Activated T-helper 1 cell treated with anti-CD3 and anti-CD28 coated beads, Interleukin-12 subunit alpha, Interleukin-12 subunit beta, Interleukin-2, Interleukin-4 antibody, amounts not matched to agents 30 ng/mL and 10 ng/mL and 1 ng/mL, durations not matched to agents 14 hours and 24 hours and 36 hours (primary cell): ENCODE measurements at regions of chr12 and their contacts with region 1.

Region 1: DNA sequence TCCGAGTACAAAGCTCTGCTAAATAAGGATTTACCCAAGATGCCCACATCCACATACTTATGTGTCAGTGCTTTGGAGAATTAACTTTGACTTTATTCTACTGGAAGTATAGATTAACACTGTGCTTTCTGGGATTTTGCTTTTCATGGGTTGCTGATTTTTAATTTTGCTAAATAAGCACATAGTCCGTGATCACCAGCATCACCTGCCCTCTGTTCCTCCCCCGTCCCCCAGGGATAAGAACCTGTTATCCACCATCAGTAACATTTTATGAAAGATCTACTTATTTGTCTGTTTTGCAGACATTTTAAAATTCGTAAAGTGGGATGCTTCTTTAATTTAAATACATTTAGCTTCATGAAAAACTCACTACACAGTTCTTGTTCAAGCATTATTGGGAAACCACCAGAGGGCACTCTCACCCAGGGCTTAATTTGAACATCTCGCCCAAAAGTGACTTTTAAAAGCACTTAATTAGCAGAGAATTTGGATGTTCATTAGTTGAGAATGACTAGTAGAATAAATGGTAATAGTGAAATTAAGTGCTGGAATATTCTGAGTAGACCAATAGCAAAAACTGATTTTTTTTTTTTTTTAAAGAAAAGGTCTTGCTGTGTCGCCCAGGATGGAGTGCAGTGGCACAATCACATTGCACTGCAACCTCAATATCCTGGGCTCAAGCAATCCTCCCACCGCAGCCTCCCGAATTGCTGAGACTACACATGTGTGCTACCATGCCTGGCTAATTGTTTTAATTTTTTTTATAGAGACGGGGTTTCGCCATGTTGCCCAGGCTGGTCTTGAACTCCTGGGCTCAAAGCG is 35.7 kb downstream of the MRPL42 start:
- DNase-seq: peak; percentile 42
- H3K4me3 Mint-ChIP-seq: no peak overlapping the region
- H3K27ac Mint-ChIP-seq: no peak overlapping the region
- H3K4me1 Mint-ChIP-seq: peaks cover 32% of the 10 kb centered on the region
- H3K27me3 Mint-ChIP-seq: no peaks in the 10 kb centered on the region

Region 2: DNA sequence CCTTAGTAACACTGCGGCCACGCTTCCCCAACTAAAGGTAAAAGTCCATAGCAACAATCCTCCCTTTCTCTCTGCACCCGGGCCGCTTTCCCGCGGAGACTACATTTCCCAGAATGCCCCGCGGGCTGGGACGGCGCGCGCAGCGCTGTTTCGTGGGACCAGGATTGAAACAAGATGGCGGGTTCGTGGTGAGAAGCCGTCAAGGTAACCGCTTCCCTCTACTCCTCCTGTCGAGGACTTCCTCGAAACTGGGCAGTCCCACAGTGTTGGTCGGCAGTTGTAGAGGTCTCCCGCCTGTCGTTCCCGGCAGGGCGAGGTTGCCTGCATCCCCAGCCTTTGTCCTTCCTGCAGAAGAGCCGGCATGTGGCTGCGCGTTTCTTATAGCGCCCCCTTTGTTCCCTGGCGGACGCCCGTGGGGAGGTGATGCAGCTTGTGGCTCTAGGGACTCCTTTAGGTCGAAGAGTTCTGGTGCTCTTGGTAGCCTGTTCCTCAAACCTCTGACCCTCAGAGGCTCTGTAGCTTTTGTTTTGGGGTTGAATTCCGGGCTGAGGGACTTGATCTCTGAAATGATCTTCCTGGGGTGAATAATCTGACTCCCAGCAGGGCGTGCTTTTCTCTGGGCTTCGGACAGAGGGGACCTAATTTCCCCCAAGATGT is 35.5 kb before region 1 on chr12 and contains the start of gene MRPL42:
- intact Hi-C with region 1: loop called (anchors 2 kb)
- DNase-seq: peak; percentile 90
- H3K4me3 Mint-ChIP-seq: peak within 1 kb of the TSS; percentile 96
- H3K27ac Mint-ChIP-seq: peak within 1 kb of the TSS; percentile 93
- H3K4me1 Mint-ChIP-seq: peaks cover 43% of the 10 kb centered on the region
- H3K27me3 Mint-ChIP-seq: no peaks in the 10 kb centered on the region
- total RNA-seq, gene MRPL42: 83.2 and 87.0 TPM in 2 replicates

Region 3: GRCh38 chr12:93742110-93742934 is 239.3 kb after region 1 on chr12:
- intact Hi-C with region 1: loop called (anchors 2 kb)
- DNase-seq: peak; percentile 40
- H3K4me3 Mint-ChIP-seq: peak overlapping the region; percentile 86
- H3K27ac Mint-ChIP-seq: peak overlapping the region; percentile 86
- H3K4me1 Mint-ChIP-seq: peaks cover 50% of the 10 kb centered on the region
- H3K27me3 Mint-ChIP-seq: peaks cover 2% of the 10 kb centered on the region

Region 4: DNA sequence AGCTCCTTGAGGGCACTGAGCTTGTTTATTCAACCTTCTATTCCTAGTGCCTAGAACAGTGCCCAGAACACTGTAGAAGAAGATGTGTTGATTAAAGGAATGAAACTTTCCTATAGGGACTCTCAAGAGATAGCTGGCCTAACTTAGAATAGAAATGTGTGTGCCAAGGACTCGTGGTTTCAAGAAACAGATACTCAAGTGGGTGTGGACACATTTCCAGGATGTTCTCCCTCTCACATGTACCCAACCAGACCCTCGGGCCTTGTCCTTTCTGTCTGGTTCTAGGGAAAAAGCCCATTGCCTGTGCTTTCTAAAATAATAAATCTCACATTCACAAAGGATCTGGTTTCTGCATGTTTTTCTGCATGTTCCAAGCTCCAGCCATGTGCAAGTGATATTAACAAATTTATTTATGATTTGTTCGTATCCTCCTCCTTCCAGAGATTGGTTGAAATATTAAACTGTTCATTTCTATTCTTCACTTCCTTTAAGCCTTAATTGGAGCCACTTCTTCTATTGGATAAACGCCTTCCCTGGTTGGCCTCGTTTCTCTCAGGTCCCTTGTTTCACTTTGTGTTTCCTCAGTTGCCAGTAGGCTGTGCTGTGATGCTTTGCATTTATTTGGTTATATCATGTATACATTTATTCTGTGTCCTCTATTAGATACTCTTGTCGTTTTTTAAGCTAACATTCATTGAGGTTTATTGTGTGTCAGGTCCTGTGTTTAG is 263.9 kb after region 1 on chr12:
- intact Hi-C with region 1: loop called (anchors 2 kb)
- DNase-seq: peak; percentile 40
- H3K4me3 Mint-ChIP-seq: peak overlapping the region; percentile 0
- H3K27ac Mint-ChIP-seq: no peak overlapping the region
- H3K4me1 Mint-ChIP-seq: peaks cover 34% of the 10 kb centered on the region
- H3K27me3 Mint-ChIP-seq: peaks cover 6% of the 10 kb centered on the region